Posterior cingulate gyrus (tissue), 11 donors: ENCODE measurements at regions of chr1 and their contacts with region 1.

Region 1: GRCh38 chr1:109904105-109904817 is 6.4 kb upstream of the CSF1 start:
- DNase-seq: peak; percentile 69 to 97 (median 80)

Region 2: DNA sequence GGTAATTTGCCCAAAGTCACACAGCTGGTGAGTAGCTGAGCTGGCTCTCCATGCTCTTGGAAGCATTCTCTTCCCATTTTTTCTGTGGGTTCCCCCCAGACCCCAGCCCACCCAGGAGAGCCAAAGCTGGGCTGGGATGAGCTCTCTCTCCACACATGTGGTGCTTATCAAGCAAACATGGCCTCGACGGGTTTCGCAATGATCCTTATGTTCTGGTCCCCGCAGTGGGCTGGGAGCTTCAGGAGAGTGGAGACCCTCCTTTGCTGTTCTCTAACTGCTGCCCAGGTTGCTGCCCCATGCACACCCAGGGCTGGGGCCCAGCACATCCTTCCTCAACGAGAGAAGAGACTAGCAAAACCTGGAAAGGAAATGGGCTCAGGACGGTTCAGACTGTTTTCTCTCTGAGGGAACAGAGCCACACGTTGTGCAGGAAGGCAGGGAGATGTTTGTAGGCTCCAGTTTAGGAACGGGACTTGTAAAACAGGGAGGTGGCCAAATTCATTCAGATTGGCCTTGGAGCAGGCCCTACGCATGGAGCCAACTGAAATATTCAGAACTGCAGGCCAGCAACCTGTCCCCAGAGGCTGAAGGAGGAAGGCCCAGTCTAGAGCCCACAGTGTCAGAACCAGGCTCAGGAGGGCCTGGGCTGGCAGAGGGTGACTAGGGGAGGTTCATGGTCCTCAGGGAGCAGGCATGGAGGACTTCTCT is 20.9 kb before region 1 on chr1:
- intact Hi-C with region 1: loop called (anchors 2 kb)
- DNase-seq: no peak